IMR-90 (cell line): ENCODE measurements at regions of chrX and their contacts with region 1.

Region 1: GRCh38 chrX:13487731-13488523 is 81.5 kb upstream of the EGFL6 start:
- DNase-seq: peak; percentile 88
- ATAC-seq: peak; percentile 77
- H3K4me3 ChIP-seq: no peak overlapping the region
- H3K27ac ChIP-seq: peak overlapping the region; percentile 97
- H3K4me1 ChIP-seq: peaks cover 2% of the 10 kb centered on the region; the same call in 1 of the 2 replicates
- H3K27me3 ChIP-seq: no peaks in the 10 kb centered on the region
- CTCF ChIP-seq: peak; percentile 77
- POLR2A ChIP-seq: no peak
- RAD21 ChIP-seq: peak; percentile 86

Region 2: GRCh38 chrX:11533211-11533651 is 1954.7 kb before region 1 on chrX:
- CTCF ChIA-PET with region 1: no interaction called
- POLR2A ChIA-PET with region 1: no interaction called
- dilution Hi-C with region 1: no loop called
- in situ Hi-C with region 1: no loop called
- intact Hi-C with region 1: loop called (anchors 10 kb)
- DNase-seq: peak; percentile 89
- ATAC-seq: peak; percentile 89
- H3K4me3 ChIP-seq: no peak overlapping the region
- H3K27ac ChIP-seq: no peak overlapping the region
- H3K4me1 ChIP-seq: peaks cover 2% of the 10 kb centered on the region; the same call in 1 of the 2 replicates
- H3K27me3 ChIP-seq: no peaks in the 10 kb centered on the region
- CTCF ChIP-seq: peak; percentile 99
- POLR2A ChIP-seq: no peak
- RAD21 ChIP-seq: peak; percentile 71

Region 3: DNA sequence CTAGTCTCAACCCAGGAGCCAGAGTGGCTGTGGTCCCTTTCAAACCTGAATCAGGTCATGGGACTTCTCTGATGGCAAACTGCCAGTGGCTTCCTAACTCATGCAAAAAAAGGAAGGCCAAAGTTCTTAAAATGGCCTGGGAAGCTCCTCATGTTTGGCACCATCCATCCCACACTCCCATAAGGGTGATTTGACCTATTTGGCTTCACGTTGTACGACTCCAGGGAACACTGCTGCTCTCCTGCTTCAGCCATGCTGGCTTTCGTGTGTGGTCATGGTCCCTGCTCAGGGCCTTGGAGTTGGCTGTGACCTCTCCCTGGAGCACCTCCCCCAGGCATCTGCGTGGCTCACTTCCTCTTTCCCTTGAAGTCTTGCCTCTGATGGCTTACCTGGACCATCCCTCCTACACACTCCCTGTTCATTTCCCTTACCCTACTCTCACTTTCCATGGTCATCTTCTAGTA is 525.9 kb before region 1 on chrX:
- CTCF ChIA-PET with region 1: no interaction called
- POLR2A ChIA-PET with region 1: no interaction called
- dilution Hi-C with region 1: no loop called
- in situ Hi-C with region 1: loop called (anchors 10 kb)
- intact Hi-C with region 1: no loop called
- DNase-seq: no peak
- ATAC-seq: no peak
- H3K4me3 ChIP-seq: no peak overlapping the region
- H3K27ac ChIP-seq: no peak overlapping the region
- H3K4me1 ChIP-seq: peaks cover 2% of the 10 kb centered on the region; the same call in 1 of the 2 replicates
- H3K27me3 ChIP-seq: no peaks in the 10 kb centered on the region
- CTCF ChIP-seq: no peak
- POLR2A ChIP-seq: no peak
- RAD21 ChIP-seq: no peak

Region 4: GRCh38 chrX:13101441-13102139 is 386.3 kb before region 1 on chrX:
- CTCF ChIA-PET with region 1: no interaction called
- POLR2A ChIA-PET with region 1: no interaction called
- dilution Hi-C with region 1: no loop called
- in situ Hi-C with region 1: loop called (anchors 25 kb)
- intact Hi-C with region 1: no loop called
- DNase-seq: peak; percentile 86
- ATAC-seq: peak; percentile 91
- H3K4me3 ChIP-seq: no peak overlapping the region
- H3K27ac ChIP-seq: no peak overlapping the region; the same call in 1 of the 2 replicates
- H3K4me1 ChIP-seq: no peaks in the 10 kb centered on the region
- H3K27me3 ChIP-seq: no peaks in the 10 kb centered on the region
- CTCF ChIP-seq: no peak
- POLR2A ChIP-seq: no peak
- RAD21 ChIP-seq: 0 out of 2 replicates have a peak, but pooled peaks have one; percentile 13

Region 5: DNA sequence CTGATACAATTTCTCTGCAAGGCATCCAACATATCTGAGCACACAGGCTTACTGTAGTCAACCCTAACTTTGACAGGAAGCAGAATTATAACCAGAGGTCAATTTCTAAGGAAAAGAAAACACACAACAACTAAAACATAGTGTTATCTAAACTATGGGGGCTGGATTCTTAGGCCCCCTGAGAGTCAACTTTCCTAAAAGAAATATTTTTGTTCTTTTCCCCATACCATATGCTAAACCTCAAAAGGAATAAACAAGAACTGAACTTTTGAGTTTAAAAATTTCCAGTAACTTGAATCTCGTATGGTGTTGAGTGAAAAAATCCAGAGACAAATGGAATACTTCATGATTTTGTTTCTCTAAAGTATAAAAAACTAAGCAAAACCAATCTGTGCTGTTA is 210.9 kb before region 1 on chrX:
- CTCF ChIA-PET with region 1: no interaction called
- POLR2A ChIA-PET with region 1: no interaction called
- dilution Hi-C with region 1: no loop called
- in situ Hi-C with region 1: no loop called
- intact Hi-C with region 1: loop called (anchors 2 kb)
- DNase-seq: no peak
- ATAC-seq: peak; percentile 44
- H3K4me3 ChIP-seq: no peak overlapping the region
- H3K27ac ChIP-seq: peak overlapping the region; percentile 94; the same call in 1 of the 2 replicates
- H3K4me1 ChIP-seq: peaks cover 3% of the 10 kb centered on the region
- H3K27me3 ChIP-seq: no peaks in the 10 kb centered on the region
- CTCF ChIP-seq: no peak
- POLR2A ChIP-seq: no peak
- RAD21 ChIP-seq: no peak

Region 6: GRCh38 chrX:13398073-13398823 is 89.7 kb before region 1 on chrX:
- CTCF ChIA-PET with region 1: interaction called, 3 read pairs
- POLR2A ChIA-PET with region 1: interaction called, 3 read pairs
- dilution Hi-C with region 1: no loop called
- in situ Hi-C with region 1: no loop called
- intact Hi-C with region 1: loop called (anchors 1 kb)
- DNase-seq: peak; percentile 100
- ATAC-seq: peak; percentile 94
- H3K4me3 ChIP-seq: no peak overlapping the region
- H3K27ac ChIP-seq: peak overlapping the region; percentile 41
- H3K4me1 ChIP-seq: peaks cover 4% of the 10 kb centered on the region
- H3K27me3 ChIP-seq: no peaks in the 10 kb centered on the region
- CTCF ChIP-seq: no peak
- POLR2A ChIP-seq: no peak
- RAD21 ChIP-seq: peak; percentile 35